Head of caudate nucleus (tissue), 42 donors: ENCODE measurements at regions of chr5 and their contacts with region 1.

Region 1: DNA sequence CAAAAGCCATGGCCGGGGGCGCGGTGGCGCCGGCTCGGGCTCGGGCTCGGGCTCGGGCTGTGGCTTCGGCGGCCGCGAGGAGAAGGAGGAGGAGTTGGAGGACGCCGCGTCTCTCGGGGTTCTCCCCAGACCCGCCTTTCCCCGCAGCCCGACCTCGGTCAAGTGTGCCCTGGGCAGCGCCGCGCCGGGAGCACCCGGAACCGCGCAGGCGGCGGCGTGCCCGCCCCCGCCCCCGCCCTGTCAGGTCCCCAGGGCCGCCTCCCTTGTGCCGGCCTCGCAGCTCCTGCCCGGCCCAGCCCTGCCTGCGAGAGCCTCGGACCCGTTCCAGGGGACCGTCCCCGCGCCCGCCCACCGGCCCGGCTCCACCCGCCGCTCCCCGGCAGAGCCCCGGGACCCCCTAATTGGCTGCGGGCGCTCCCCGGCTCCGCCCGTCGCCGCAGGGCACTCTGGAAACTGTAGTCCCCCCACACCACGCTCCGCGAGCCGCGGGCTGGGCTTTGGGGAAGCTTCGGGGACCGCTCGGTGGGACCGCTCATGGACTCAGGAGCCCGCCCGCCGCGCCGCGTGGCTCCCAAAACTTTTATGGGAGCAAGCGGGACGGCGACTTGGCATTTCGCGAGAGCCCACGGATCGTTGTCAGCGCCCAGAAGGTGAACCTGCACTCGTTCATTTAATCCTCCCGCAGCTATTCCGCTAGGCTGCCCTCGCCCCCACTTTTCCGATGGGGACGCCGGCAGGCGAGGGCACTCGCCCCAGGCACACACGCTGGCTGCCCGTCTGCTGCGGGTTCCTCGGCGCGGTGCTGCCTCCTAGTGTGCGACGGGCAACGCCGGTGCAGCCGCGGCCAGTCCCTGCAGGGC is at the start of gene STK10:
- DNase-seq: peak; percentile 69 to 96 (median 92)

Region 2: GRCh38 chr5:172006321-172007174 is 181.7 kb before region 1 on chr5 and contains the start of gene FBXW11:
- intact Hi-C with region 1: loop called (anchors 10 kb)
- DNase-seq: peak; percentile 95 to 99 (median 98)

Region 3: DNA sequence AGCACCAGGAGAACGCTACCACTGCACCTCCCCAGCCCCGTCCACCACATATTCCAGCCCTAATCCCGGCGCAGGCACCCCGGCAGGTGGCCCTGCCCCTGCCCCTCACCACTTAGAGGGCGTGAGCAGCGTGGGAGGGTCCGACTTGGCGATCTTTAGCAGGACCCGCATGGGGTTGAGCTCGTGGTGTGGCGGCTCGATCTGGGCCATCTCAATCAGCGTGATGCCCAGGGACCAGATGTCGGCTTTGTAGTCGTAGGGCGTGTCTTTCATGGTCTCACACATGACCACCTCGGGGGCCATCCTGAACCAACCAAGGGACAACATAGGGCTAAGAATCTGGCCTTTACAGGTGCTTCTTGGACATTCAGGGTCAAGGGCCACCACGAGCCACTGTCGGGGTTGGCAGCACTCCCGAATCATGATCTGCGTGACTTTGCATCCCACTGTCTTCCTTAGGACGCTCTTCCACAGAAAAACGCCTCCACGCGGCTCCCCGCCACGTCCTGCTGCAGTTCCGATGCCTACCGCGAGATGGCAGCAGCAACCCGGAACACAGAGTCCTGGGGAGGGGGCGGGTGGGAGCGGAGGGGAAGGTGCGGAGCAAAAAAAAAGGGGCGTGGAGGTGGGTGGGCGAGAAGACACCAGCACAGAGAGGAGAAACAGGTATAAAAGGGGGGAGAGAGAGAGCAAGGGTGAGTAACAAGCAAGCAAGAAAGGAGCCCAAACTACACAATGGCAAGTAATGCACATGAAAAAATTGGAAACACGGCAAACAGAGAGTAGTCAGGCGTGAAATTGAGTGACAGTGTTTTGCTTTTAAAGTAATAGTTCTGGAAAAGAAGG is 81.5 kb before region 1 on chr5:
- intact Hi-C with region 1: loop called (anchors 1 kb)
- DNase-seq: peak; percentile 43 to 91 (median 76)

Region 4: DNA sequence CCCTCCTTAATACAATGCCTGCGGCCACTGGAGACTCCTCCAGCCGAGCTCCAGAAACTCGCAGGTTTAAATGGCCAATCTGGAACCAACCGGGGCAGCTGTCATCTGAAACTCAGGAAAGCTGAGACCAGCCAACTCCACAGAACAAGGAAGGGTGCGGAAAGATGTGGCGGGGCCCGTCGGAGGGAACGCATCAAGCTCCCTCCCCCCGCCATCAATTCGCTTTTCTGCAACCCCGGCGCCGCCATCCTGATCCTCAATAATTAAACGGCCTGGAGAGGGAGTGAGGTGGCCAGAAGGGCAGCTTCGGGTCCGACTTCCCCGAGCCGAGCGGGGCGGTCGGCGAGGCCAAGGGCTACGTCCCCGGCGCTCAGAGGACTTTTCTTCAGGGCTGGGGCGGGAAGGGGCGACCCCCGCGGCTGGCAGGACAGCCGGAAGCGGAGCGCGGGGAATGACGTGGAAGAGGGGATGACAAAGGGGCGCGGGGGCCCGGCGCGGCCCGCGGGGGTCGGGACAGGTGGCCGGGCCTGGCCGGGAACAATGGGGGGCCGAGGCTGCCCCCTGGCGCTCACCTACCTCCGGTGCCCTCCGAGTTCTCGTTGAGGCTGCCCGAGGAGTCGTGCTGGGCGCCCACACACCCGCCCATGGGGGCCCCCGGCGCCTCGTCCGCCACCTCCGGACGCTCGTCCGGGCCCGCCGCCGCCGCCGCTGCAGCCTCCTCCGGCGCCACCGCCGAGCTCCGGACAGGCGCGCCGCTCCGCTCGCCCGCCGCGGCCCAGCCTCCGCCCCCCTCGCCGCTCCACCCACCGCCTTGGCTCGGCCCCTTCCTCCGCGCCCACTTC is 95.0 kb after region 1 on chr5 and contains the start of gene UBTD2:
- intact Hi-C with region 1: loop called (anchors 5 kb)
- DNase-seq: peak; percentile 18 to 91 (median 78)

Region 5: DNA sequence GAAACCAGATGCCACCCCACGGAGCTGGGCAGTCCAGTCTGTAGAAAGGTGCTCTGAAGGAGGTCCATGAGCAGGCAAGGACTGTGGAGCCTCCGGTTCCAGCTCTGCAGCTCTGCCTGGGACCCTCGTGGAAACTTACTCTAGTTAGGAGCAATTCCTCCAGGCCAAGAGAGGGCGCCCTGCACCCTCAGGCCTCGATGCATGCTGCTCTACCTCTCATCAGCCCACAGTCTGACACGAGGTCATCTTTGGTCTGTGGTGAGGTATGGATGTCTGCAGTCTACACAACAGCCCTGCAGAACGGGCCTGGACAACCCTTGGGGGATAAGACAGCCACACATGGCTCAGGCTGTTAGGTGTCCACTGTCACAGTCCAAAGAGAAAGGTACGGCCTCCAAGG is 145.9 kb after region 1 on chr5:
- intact Hi-C with region 1: no loop called
- DNase-seq: peak in 2 of 42 donors; percentile 8 to 9